ENCODE measurements at regions of chr2 and their contacts with region 1.

Region 1: DNA sequence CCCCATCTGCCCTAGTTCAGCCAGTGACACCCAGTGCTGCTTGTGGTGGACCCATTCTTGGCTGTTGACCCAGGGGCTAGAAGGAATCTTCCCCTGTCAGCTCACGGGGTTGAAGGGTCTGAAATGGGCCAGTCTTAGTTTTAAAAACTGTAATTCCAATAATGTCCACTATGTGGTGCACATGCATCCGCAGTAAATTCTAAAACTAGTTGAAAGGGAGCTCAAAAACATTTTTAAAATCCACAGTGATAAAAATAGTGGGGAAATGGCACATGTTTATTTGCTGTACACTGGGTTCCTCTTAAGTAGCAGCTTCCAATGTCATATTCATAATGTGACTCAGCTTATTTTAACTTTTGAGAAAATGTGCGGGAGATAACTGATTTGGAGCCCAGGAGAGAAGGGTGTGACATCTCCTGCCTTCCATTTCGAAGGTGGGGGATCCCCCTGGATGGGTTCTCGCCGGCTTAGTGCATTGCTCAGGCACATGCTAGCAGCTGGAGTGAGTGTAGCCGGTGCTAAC is 32.8 kb downstream of the GRHL1 start:
- DNase-seq: peak; percentile 43
- ATAC-seq: peak; percentile 64
- H3K4me3 Mint-ChIP-seq: no peak overlapping the region
- H3K27ac Mint-ChIP-seq: no peak overlapping the region
- H3K4me1 Mint-ChIP-seq: peaks cover 14% of the 10 kb centered on the region
- H3K27me3 Mint-ChIP-seq: peaks cover 25% of the 10 kb centered on the region

Region 2: DNA sequence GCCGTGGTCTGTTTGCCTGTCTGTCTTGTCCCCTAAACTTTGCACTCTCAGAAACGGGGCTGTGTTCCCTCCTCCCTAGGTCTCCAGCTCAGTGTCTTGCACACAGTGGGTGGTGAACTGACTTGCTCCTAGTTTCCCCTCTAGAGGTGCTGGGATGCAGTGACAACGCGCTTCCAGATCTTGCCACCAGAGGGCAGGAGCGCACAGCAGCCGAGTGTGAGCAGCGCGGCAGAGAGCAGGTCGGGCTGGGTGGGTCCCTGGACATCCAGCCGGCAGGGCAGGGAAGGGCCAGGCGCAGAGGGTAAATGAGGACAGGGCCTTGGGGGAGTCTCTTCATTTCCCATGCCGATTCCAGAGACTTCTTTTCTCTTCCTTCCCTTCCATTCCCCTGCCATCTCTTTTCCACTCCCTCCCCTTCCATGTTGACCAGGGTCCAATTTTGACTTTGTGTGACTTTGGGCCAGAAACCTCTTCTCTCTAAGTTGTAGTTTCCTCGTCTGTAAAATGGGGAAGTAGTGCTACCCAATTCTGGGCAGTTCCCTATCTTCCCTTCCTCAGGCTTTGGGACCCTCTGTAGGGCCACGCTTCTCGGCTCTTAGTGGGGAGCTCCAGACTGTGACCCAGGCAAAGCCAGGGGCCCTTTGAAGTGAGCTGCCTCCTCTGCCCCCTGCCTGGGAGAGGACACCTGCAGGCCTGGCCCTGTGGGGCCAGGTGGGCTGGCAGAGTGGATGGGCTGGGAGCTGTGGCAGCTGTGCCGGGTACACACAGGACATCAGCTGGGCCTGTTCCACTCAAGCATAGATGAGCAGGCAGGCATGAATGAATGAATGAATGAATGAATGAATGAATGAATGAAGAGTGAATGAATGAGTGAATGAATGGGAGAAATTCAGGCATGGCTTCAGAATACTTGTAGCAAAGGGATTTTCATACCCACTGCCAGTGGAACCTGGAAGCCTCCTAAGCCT is 184.3 kb before region 1 on chr2:
- CTCF ChIA-PET with region 1: interaction called, 10 read pairs
- POLR2A ChIA-PET with region 1: no interaction called
- DNase-seq: peak; percentile 91
- ATAC-seq: peak; percentile 96
- H3K4me3 Mint-ChIP-seq: peak overlapping the region; percentile 60
- H3K27ac Mint-ChIP-seq: peak overlapping the region; percentile 88
- H3K4me1 Mint-ChIP-seq: peaks cover 38% of the 10 kb centered on the region
- H3K27me3 Mint-ChIP-seq: peaks cover 4% of the 10 kb centered on the region

Region 3: GRCh38 chr2:9961013-9961412 is 23.3 kb before region 1 on chr2:
- CTCF ChIA-PET with region 1: interaction called, 18 read pairs
- POLR2A ChIA-PET with region 1: no interaction called
- DNase-seq: no peak
- ATAC-seq: no peak
- H3K4me3 Mint-ChIP-seq: no peak overlapping the region
- H3K27ac Mint-ChIP-seq: no peak overlapping the region
- H3K4me1 Mint-ChIP-seq: peaks cover 13% of the 10 kb centered on the region
- H3K27me3 Mint-ChIP-seq: peaks cover 20% of the 10 kb centered on the region

Region 4: GRCh38 chr2:9998916-9999654 is 14.8 kb after region 1 on chr2:
- CTCF ChIA-PET with region 1: interaction called, 31 read pairs
- POLR2A ChIA-PET with region 1: interaction called, 3 read pairs
- DNase-seq: no peak
- ATAC-seq: no peak
- H3K4me3 Mint-ChIP-seq: no peak overlapping the region
- H3K27ac Mint-ChIP-seq: no peak overlapping the region
- H3K4me1 Mint-ChIP-seq: no peaks in the 10 kb centered on the region
- H3K27me3 Mint-ChIP-seq: no peaks in the 10 kb centered on the region

Region 5: GRCh38 chr2:10019174-10019573 is 34.9 kb after region 1 on chr2:
- CTCF ChIA-PET with region 1: interaction called, 17 read pairs
- POLR2A ChIA-PET with region 1: no interaction called
- DNase-seq: no peak
- ATAC-seq: no peak
- H3K4me3 Mint-ChIP-seq: no peak overlapping the region
- H3K27ac Mint-ChIP-seq: no peak overlapping the region
- H3K4me1 Mint-ChIP-seq: no peaks in the 10 kb centered on the region
- H3K27me3 Mint-ChIP-seq: peaks cover 6% of the 10 kb centered on the region

Region 6: GRCh38 chr2:10043906-10044601 is 59.8 kb after region 1 on chr2:
- CTCF ChIA-PET with region 1: interaction called, 205 read pairs
- POLR2A ChIA-PET with region 1: interaction called, 3 read pairs
- DNase-seq: peak; percentile 94
- ATAC-seq: peak; percentile 74
- H3K4me3 Mint-ChIP-seq: peak overlapping the region; percentile 72
- H3K27ac Mint-ChIP-seq: peak overlapping the region; percentile 85
- H3K4me1 Mint-ChIP-seq: peaks cover 24% of the 10 kb centered on the region
- H3K27me3 Mint-ChIP-seq: peaks cover 23% of the 10 kb centered on the region

Region 7: GRCh38 chr2:10072656-10073480 is 88.6 kb after region 1 on chr2:
- CTCF ChIA-PET with region 1: interaction called, 21 read pairs
- POLR2A ChIA-PET with region 1: no interaction called
- DNase-seq: peak; percentile 89
- ATAC-seq: peak; percentile 97
- H3K4me3 Mint-ChIP-seq: no peak overlapping the region
- H3K27ac Mint-ChIP-seq: no peak overlapping the region
- H3K4me1 Mint-ChIP-seq: peaks cover 13% of the 10 kb centered on the region
- H3K27me3 Mint-ChIP-seq: peaks cover 51% of the 10 kb centered on the region

Region 8: GRCh38 chr2:10193851-10194820 is 209.9 kb after region 1 on chr2:
- CTCF ChIA-PET with region 1: no interaction called
- POLR2A ChIA-PET with region 1: no interaction called
- DNase-seq: no peak
- ATAC-seq: no peak
- H3K4me3 Mint-ChIP-seq: no peak overlapping the region
- H3K27ac Mint-ChIP-seq: no peak overlapping the region
- H3K4me1 Mint-ChIP-seq: no peaks in the 10 kb centered on the region
- H3K27me3 Mint-ChIP-seq: no peaks in the 10 kb centered on the region

Measured in activated CD8-positive, alpha-beta T cell treated with anti-CD3 and anti-CD28 coated beads, Interleukin-2, amount 10 ng/mL, durations not matched to agents 7 days and 5 days (primary cell).